ENCODE measurements at regions of chr14 and their contacts with region 1.

Region 1: GRCh38 chr14:103899316-103899715 is 28.9 kb upstream of the TDRD9 start:
- DNase-seq: no peak
- ATAC-seq: peak; percentile 46
- H3K4me3 Mint-ChIP-seq: no peak overlapping the region
- H3K27ac Mint-ChIP-seq: no peak overlapping the region
- H3K4me1 Mint-ChIP-seq: no peaks in the 10 kb centered on the region
- H3K27me3 Mint-ChIP-seq: peaks cover 9% of the 10 kb centered on the region
- CTCF ChIP-seq: no peak

Region 2: GRCh38 chr14:103770902-103771301 is 128.4 kb before region 1 on chr14:
- CTCF ChIA-PET with region 1: interaction called, 11 read pairs
- POLR2A ChIA-PET with region 1: no interaction called
- DNase-seq: no peak
- ATAC-seq: peak; percentile 72
- H3K4me3 Mint-ChIP-seq: no peak overlapping the region
- H3K27ac Mint-ChIP-seq: peak overlapping the region; percentile 57; the same call in 1 of the 2 replicates
- H3K4me1 Mint-ChIP-seq: no peaks in the 10 kb centered on the region
- H3K27me3 Mint-ChIP-seq: no peaks in the 10 kb centered on the region
- CTCF ChIP-seq: no peak

Region 3: DNA sequence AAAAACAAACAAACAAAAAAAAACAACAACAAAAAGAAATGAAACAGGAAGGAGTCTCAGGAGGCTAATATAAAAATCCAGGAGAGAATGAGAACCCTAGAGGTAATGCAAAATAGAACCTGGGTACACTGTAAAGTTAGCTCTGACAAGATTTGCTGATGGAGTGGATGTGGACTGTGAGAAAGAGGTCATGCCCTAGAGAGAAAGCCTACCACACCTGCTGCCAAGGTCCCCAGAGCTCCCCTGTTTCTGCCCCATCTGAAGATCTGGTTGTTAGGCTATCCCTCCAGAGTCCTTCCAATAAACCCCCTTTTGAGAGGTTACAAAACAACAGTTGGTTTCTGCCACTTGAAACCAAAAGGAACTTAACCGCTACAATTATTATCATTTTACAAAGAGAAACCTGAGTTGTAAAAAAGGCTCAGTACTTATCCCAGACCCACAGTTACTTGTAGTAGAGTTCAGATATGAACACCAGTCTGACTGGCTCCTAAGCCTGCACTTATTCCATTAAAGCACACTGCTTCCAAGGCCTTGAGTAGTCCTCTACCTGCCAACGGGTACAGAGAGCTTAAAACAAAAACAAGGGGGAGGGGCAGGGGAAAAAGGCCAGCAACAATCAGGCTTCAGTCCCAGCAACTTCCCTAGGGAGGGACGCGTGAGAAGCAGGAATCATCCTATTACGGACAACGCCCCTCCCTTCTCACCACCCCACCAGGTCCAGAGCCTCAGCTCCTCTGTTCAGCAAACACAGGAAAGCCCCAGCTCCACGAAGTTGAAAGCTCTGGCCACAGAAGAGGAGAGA is 79.6 kb before region 1 on chr14:
- CTCF ChIA-PET with region 1: interaction called, 31 read pairs
- POLR2A ChIA-PET with region 1: no interaction called
- DNase-seq: peak; percentile 62
- ATAC-seq: peak; percentile 99
- H3K4me3 Mint-ChIP-seq: peak overlapping the region; percentile 37
- H3K27ac Mint-ChIP-seq: peak overlapping the region; percentile 90
- H3K4me1 Mint-ChIP-seq: peaks cover 23% of the 10 kb centered on the region
- H3K27me3 Mint-ChIP-seq: no peaks in the 10 kb centered on the region
- CTCF ChIP-seq: no peak

Region 4: DNA sequence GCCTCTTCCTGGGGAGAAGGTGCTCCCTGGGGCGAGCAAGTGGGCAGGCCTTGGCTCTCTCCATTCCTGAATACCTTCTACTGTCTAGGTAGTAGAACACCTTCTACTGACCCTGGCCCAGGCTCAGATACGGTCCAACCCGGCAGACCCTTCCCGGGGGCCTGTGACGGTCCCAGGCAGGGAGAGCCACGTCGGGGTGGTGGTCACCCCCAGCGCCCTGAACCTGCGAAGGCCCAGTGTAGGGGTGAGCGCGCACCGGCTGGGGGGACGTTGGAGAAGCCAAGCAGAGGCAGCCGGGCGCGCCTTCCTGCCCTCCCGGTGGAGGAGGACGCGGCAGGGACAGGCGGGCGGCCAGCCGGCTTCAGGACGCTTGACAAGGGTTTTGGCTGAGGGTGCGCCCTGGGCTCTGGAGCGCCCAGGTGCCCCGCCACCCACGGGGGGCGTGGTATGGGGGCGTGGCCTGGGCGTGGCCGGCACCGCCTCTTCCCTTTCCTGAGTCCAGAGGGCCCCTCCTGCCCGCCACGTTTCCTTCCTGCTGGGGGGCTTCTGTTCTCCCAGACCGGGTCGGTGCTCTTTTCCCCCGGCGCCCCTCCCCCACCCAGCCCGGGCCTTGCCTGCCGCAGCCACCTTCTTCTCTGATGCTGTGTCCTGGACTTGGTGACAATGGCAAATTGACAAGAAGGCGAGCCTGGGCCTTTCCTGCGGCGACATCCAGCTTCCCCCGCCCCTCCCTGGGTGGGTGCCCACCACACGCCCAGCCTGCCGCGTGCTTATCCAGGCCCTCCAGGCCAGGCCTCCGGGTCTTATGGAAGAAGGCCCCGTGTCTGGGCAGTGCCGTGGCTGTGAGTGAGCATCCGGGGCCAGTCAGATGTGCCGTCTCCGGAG is 27.5 kb before region 1 on chr14:
- CTCF ChIA-PET with region 1: interaction called, 22 read pairs
- POLR2A ChIA-PET with region 1: no interaction called
- DNase-seq: peak; percentile 81
- ATAC-seq: peak; percentile 86
- H3K4me3 Mint-ChIP-seq: peak overlapping the region; percentile 62
- H3K27ac Mint-ChIP-seq: no peak overlapping the region
- H3K4me1 Mint-ChIP-seq: peaks cover 11% of the 10 kb centered on the region
- H3K27me3 Mint-ChIP-seq: no peaks in the 10 kb centered on the region
- CTCF ChIP-seq: no peak

Region 5: DNA sequence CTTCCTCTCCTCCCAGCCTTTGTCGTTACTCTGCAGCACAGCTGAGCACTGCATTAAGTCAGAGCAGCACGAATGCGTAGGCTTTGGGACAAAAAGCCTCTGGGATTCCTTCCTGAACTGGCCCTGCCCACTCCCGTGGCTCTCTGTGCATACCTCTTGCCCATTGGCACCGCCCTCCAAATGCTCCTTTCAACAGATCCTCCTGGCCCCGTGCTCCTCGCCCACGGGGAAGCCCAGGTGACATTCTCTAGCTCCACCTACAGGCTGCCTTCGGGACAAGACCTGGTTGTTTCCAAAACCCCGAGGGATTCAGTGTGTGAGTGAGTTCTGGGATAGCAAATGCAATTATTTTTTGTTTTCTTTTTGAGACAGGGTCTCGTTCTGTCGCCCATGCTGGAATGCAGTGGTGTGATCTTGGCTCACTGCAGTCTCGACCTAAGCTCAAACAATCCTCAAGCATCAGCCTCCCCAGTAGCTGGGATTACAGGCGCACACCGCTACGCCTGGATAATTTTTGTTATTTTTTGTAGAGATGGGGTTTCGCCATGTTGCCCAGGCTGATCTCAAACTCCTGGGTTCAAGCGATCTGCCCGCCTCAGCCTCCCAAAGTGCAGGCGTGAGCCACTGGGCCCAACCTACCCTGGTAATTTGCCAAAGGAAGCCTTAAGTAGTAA is 11.1 kb after region 1 on chr14:
- CTCF ChIA-PET with region 1: interaction called, 71 read pairs
- POLR2A ChIA-PET with region 1: no interaction called
- DNase-seq: peak; percentile 88
- ATAC-seq: peak; percentile 96
- H3K4me3 Mint-ChIP-seq: peak overlapping the region; percentile 53
- H3K27ac Mint-ChIP-seq: peak overlapping the region; percentile 5
- H3K4me1 Mint-ChIP-seq: peaks cover 14% of the 10 kb centered on the region
- H3K27me3 Mint-ChIP-seq: no peaks in the 10 kb centered on the region
- CTCF ChIP-seq: peak; percentile 44

Region 6: DNA sequence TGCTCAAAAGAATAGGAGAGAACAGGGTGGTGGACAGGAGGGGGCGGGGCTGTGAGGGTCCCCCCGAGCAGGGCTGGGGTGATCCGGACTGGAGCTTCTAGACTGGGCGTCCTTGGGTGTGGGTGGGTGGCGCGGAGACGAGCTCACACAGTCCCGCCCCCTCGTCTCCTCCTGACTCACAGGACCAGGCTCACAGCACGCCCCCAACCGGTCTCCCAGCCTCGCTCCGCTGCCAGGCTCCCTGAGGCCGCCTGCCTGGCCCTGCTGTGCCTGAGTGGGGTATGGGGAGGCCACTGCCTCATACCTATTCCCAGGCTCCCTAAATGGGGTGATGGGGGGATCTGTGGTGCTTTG is 208.9 kb after region 1 on chr14:
- CTCF ChIA-PET with region 1: no interaction called
- POLR2A ChIA-PET with region 1: no interaction called
- DNase-seq: peak; percentile 11
- ATAC-seq: peak; percentile 28; the same call in 1 of the 2 replicates
- H3K4me3 Mint-ChIP-seq: no peak overlapping the region
- H3K27ac Mint-ChIP-seq: no peak overlapping the region
- H3K4me1 Mint-ChIP-seq: peaks cover 2% of the 10 kb centered on the region; the same call in 1 of the 2 replicates
- H3K27me3 Mint-ChIP-seq: no peaks in the 10 kb centered on the region
- CTCF ChIP-seq: no peak